CD8-positive, alpha-beta T cell (primary cell): ENCODE measurements at regions of chr15 and their contacts with region 1.

Region 1: GRCh38 chr15:40782580-40783227 is 12.9 kb downstream of the C15orf62 start:
- DNase-seq: peak; percentile 53 to 86 (median 83)
- ATAC-seq: peak; percentile 93
- H3K4me3 ChIP-seq: no peak overlapping the region
- H3K4me3 Mint-ChIP-seq: no peak overlapping the region
- H3K27ac ChIP-seq: no peak overlapping the region
- H3K27ac Mint-ChIP-seq: no peak overlapping the region
- H3K4me1 ChIP-seq: peaks cover 14% of the 10 kb centered on the region
- H3K4me1 Mint-ChIP-seq: peaks cover 19% of the 10 kb centered on the region
- H3K27me3 ChIP-seq: no peaks in the 10 kb centered on the region
- H3K27me3 Mint-ChIP-seq: no peaks in the 10 kb centered on the region
- CTCF ChIP-seq: peak; percentile 79

Region 2: DNA sequence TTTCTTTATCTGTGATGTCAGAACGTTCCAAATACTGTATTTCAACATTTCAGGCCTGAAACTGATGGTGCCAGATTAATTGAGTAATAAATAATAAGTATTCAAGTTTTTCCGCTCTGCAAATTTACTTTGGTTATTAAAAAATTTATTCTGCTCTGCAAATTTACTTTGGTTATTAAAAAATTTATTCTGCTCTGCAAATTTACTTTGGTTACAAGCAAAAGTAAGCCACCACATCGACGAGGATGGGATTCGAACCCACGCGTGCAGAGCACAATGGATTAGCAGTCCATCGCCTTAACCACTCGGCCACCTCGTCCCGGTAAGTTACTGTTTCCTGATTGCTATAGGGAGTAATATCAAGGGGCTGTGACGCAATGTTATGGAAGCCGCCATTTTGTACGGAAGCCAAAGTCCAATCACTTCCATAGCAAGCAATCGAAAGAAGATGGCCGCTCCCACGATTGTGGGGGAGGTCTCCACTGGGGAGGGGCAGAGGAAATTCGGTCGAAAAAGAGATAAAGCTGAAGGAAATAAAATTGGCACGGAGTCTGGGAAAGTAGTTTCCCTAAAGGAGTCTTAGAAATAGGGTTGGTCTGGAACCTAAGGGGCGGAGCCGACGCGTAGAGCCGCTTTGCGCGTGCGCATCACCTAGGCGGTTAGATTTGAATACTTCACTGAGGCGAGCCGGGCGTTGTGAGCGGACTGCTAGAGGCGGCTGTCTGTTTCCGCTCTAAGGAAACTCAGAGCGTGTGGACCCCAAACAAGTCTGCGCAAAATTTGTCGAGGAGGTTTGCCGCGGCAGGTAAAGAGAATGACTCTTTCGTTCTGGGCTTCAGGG is 188.9 kb before region 1 on chr15 and contains the start of gene KNL1:
- CTCF ChIA-PET with region 1: interaction called, 13 read pairs
- POLR2A ChIA-PET with region 1: no interaction called
- intact Hi-C with region 1: loop called (anchors 1 kb)
- DNase-seq: peak; percentile 70 to 96 (median 85)
- ATAC-seq: peak; percentile 83
- H3K4me3 ChIP-seq: peak within 1 kb of the TSS; percentile 76 to 82
- H3K4me3 Mint-ChIP-seq: peak within 1 kb of the TSS; percentile 95
- H3K27ac ChIP-seq: peak within 1 kb of the TSS; percentile 78 to 92
- H3K27ac Mint-ChIP-seq: peak within 1 kb of the TSS; percentile 98
- H3K4me1 ChIP-seq: no peaks in the 10 kb centered on the region
- H3K4me1 Mint-ChIP-seq: peaks cover 20% of the 10 kb centered on the region
- H3K27me3 ChIP-seq: peaks cover 0 to 2% of the 10 kb centered on the region in 2 experiments
- H3K27me3 Mint-ChIP-seq: peaks cover 6% of the 10 kb centered on the region
- CTCF ChIP-seq: no peak
- total RNA-seq, gene KNL1: 0.83 to 0.98 TPM

Region 3: DNA sequence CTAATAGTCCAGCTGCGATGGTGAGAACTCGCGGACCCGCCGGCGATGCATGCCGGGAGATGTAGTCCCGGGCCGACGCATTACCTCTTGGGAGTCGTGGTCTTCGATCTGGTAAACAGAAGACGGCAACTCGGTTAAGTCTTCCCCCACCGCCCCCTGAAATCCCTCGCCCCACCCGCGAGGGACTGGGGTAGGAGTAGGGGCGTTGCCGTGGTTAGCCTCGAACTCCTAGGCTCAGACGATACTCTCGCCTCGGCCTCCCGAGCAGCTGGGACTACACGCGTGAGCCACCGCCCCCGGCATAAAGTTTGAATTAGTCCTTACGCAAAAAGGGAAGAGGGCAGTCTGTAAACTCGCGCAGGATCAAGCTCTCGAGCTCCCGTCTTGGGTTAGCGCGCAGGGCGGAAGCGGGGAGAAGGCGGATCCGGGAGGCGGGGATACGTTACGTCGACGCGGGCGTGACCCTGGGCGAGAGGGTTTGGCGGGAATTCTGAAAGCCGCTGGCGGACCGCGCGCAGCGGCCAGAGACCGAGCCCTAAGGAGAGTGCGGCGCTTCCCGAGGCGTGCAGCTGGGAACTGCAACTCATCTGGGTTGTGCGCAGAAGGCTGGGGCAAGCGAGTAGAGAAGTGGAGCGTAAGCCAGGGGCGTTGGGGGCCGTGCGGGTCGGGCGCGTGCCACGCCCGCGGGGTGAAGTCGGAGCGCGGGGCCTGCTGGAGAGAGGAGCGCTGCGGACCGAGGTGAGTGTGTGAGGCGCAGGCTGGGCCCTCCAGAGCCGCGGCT is 87.8 kb before region 1 on chr15 and contains the start of gene RAD51:
- CTCF ChIA-PET with region 1: interaction called, 17 read pairs
- POLR2A ChIA-PET with region 1: interaction called, 7 read pairs
- intact Hi-C with region 1: no loop called
- DNase-seq: peak; percentile 82 to 96 (median 94)
- ATAC-seq: peak; percentile 94
- H3K4me3 ChIP-seq: peak within 1 kb of the TSS; percentile 84 to 94
- H3K4me3 Mint-ChIP-seq: peak within 1 kb of the TSS; percentile 99
- H3K27ac ChIP-seq: peak within 1 kb of the TSS; percentile 83 to 98
- H3K27ac Mint-ChIP-seq: peak within 1 kb of the TSS; percentile 99
- H3K4me1 ChIP-seq: peaks cover 12% of the 10 kb centered on the region
- H3K4me1 Mint-ChIP-seq: peaks cover 27% of the 10 kb centered on the region
- H3K27me3 ChIP-seq: no peaks in the 10 kb centered on the region
- H3K27me3 Mint-ChIP-seq: no peaks in the 10 kb centered on the region
- CTCF ChIP-seq: no peak
- total RNA-seq, gene RAD51: 1.3 to 1.5 TPM

Region 4: GRCh38 chr15:40743921-40744814 is 38.5 kb before region 1 on chr15:
- CTCF ChIA-PET with region 1: interaction called, 21 read pairs
- POLR2A ChIA-PET with region 1: no interaction called
- intact Hi-C with region 1: loop called (anchors 1 to 2 kb)
- DNase-seq: peak; percentile 23 to 92 (median 69)
- ATAC-seq: peak; percentile 92
- H3K4me3 ChIP-seq: peak overlapping the region in 1 of 2 experiments; percentile 5
- H3K4me3 Mint-ChIP-seq: no peak overlapping the region
- H3K27ac ChIP-seq: peak overlapping the region; percentile 29 to 95
- H3K27ac Mint-ChIP-seq: peak overlapping the region; percentile 96
- H3K4me1 ChIP-seq: peaks cover 5% of the 10 kb centered on the region
- H3K4me1 Mint-ChIP-seq: peaks cover 16% of the 10 kb centered on the region
- H3K27me3 ChIP-seq: no peaks in the 10 kb centered on the region
- H3K27me3 Mint-ChIP-seq: no peaks in the 10 kb centered on the region
- CTCF ChIP-seq: no peak

Region 5: DNA sequence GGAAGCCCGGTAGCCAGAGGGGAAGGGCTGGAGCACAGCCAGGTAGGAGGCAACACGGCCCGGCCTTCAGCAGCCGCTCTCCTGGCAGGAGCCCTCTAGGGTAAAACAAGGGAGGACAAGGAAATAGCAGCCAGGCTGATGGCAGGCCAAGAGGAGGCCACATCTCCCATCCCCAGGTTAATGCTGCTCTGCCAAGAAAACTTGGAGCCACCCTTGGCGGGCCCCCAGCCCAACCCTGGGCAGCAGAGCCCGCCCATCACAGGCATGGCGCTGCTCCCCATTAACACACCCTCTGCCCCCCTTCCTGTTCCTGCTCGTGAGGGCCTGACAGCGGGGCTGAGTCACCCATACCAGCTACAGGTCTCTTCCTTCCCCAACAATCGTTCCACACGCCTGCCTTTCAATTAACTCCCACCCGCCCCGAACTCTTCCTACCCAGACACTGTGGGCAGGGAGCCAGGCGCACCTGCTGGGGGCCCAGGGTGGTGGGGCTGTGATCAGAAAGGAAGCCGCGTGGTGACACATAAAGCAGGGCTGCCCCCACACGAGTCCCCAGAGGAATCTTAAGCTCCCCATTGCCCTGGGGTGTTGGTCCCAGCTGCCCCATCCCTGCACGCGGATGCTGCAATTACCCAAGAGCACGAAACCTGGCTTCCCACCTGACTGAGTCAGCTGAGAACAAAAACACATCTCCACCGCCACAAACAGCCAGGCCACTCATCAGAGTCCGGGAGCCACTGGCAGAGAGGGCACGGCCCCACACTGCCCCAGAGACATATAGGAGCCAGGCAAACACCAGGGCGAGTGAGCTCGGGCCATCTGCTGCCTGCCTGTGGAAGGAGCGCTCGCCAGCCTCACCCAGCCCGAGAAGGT is 13.2 kb before region 1 on chr15 and contains the start of gene C15orf62:
- CTCF ChIA-PET with region 1: interaction called, 36 read pairs
- POLR2A ChIA-PET with region 1: interaction called, 3 read pairs
- intact Hi-C with region 1: loop called in 1 of 2 experiments (anchors 2 kb)
- DNase-seq: peak in 8 of 9 experiments; percentile 44 to 82 (median 70)
- ATAC-seq: peak; percentile 58
- H3K4me3 ChIP-seq: peak within 1 kb of the TSS in 1 of 2 experiments; percentile 19
- H3K4me3 Mint-ChIP-seq: peak within 1 kb of the TSS; percentile 69
- H3K27ac ChIP-seq: peak within 1 kb of the TSS; percentile 35 to 66
- H3K27ac Mint-ChIP-seq: peak within 1 kb of the TSS; percentile 94
- H3K4me1 ChIP-seq: peaks cover 39% of the 10 kb centered on the region
- H3K4me1 Mint-ChIP-seq: peaks cover 41% of the 10 kb centered on the region
- H3K27me3 ChIP-seq: no peaks in the 10 kb centered on the region
- H3K27me3 Mint-ChIP-seq: no peaks in the 10 kb centered on the region
- CTCF ChIP-seq: no peak
- total RNA-seq, gene C15orf62: 1.0 to 1.1 TPM